CD8-positive, alpha-beta T cell (primary cell): ENCODE measurements at regions of chr15 and their contacts with region 1.

Region 1: DNA sequence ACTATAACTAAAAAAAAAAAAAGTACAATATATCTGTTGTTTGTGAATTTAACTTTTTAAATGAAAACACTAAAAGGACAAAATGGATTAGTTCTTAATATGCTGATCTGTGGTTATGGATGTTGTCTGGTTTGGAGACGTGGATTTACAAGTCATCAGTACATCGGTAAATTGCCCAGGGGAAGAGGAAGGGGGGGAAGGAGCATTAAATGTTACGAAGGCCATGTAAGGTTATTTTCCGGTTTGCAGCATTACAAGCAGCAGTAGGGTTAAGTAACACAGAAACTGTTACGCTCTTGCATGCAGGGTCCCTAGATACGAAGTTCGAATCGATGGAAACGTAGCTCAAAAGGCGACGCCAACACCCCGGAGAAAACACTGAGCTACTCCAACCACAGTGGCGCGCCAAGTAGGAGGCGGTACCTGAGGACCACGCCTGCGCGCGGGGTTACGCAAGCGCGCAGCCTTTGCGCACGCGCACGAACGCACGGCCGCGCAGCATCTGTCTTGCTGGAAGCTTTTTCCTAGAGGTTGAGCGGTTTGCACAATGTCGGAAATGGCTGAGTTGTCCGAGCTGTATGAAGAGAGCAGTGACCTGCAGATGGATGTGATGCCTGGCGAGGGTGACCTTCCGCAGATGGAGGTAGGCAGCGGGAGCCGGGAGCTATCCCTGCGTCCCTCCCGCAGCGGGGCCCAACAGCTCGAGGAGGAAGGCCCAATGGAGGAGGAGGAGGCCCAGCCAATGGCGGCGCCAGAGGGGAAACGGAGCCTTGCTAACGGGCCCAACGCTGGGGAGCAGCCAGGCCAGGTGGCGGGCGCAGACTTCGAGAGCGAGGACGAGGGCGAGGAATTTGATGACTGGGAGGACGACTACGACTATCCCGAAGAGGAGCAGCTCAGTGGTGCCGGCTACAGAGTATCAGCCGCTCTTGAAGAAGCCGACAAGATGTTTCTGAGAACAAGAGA is at the start of gene EID1:
- DNase-seq: peak; percentile 86 to 97 (median 92)
- ATAC-seq: peak; percentile 94
- H3K4me3 ChIP-seq: peak within 1 kb of the TSS; percentile 76 to 91
- H3K4me3 Mint-ChIP-seq: peak within 1 kb of the TSS; percentile 94
- H3K27ac ChIP-seq: peak within 1 kb of the TSS; percentile 74 to 84
- H3K27ac Mint-ChIP-seq: peak within 1 kb of the TSS; percentile 98
- H3K4me1 ChIP-seq: peaks cover 11% of the 10 kb centered on the region
- H3K4me1 Mint-ChIP-seq: peaks cover 23% of the 10 kb centered on the region
- H3K27me3 ChIP-seq: peaks cover 0 to 2% of the 10 kb centered on the region in 2 experiments
- H3K27me3 Mint-ChIP-seq: peaks cover 6% of the 10 kb centered on the region
- CTCF ChIP-seq: no peak
- total RNA-seq, gene EID1: 34.5 to 34.7 TPM

Region 2: GRCh38 chr15:47773163-47773562 is 1104.8 kb before region 1 on chr15:
- CTCF ChIA-PET with region 1: no interaction called
- POLR2A ChIA-PET with region 1: no interaction called
- intact Hi-C with region 1: no loop called
- DNase-seq: no peak
- ATAC-seq: no peak
- H3K4me3 ChIP-seq: no peak overlapping the region
- H3K4me3 Mint-ChIP-seq: no peak overlapping the region
- H3K27ac ChIP-seq: no peak overlapping the region
- H3K27ac Mint-ChIP-seq: no peak overlapping the region
- H3K4me1 ChIP-seq: no peaks in the 10 kb centered on the region
- H3K4me1 Mint-ChIP-seq: no peaks in the 10 kb centered on the region
- H3K27me3 ChIP-seq: no peaks in the 10 kb centered on the region
- H3K27me3 Mint-ChIP-seq: peaks cover 2% of the 10 kb centered on the region
- CTCF ChIP-seq: no peak

Region 3: DNA sequence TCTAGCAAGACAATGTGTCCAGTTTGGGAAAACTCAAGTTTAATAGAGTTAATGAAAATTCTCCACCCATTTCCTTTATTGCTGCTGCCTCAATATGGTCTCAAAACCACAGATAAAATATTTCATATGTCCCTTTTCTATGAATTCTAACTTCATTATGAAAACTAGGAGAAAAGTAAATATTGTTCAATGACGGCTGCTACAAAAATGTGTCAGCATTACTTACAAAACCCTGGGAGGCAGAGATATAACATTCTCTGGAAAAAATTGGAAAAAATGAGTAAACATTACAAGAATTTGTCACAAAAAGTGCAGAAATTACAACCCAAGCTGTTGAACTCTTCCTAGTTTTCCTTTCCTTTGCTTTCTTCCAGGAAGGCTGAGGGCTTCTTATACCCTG is 210.2 kb before region 1 on chr15:
- CTCF ChIA-PET with region 1: no interaction called
- POLR2A ChIA-PET with region 1: no interaction called
- intact Hi-C with region 1: no loop called
- DNase-seq: no peak
- ATAC-seq: no peak
- H3K4me3 ChIP-seq: no peak overlapping the region
- H3K4me3 Mint-ChIP-seq: no peak overlapping the region
- H3K27ac ChIP-seq: no peak overlapping the region
- H3K27ac Mint-ChIP-seq: no peak overlapping the region
- H3K4me1 ChIP-seq: no peaks in the 10 kb centered on the region
- H3K4me1 Mint-ChIP-seq: no peaks in the 10 kb centered on the region
- H3K27me3 ChIP-seq: no peaks in the 10 kb centered on the region
- H3K27me3 Mint-ChIP-seq: no peaks in the 10 kb centered on the region
- CTCF ChIP-seq: no peak

Region 4: DNA sequence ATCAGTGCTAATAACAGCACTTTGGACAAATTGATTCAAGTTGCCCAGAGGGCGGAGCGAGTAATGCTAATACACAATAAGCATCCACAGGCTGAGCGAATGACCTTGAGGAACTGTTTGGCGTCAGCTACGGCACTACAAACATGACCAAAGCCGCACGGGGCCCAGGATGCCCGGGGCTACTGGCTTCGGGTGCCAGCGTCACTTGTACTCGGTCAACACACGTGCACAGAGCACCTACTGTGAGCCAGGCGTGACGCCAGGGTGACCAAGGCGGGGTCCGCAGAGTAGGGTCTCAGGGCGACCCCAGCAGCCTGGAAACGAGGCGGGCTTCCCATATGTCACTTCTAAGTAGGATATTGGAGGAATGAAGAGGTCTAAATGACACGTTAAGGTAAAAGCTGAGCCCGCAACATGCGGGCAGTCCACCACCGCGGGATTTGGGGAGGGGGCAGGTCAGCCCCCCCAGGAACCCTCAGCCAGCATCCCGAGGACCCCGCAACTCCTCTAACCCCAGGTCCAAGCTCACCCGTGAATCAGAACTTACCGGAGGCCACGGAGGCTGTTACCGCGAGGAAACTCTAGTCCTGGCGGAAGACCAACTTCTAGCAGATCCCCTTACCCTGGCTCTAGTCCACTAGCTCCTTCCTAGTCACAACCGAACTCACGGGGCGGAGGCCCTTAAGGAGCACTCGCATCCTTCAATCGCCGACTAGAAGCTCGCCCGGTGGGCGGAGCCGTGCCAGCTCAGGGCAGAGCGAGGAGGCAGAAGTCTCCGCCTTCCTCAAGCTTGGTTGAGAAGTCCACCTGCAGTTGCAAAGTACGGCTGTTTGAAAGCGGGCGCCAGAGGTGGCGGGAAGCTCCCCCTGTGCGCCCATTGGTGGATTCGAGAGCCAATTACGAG is 67.2 kb before region 1 on chr15 and contains the start of gene CEP152:
- CTCF ChIA-PET with region 1: interaction called, 4 read pairs
- POLR2A ChIA-PET with region 1: interaction called, 16 read pairs
- intact Hi-C with region 1: loop called (anchors 1 to 2 kb)
- DNase-seq: peak; percentile 96 to 100 (median 98)
- ATAC-seq: peak; percentile 94
- H3K4me3 ChIP-seq: peak within 1 kb of the TSS; percentile 83 to 95
- H3K4me3 Mint-ChIP-seq: peak within 1 kb of the TSS; percentile 90
- H3K27ac ChIP-seq: peak within 1 kb of the TSS; percentile 64 to 73
- H3K27ac Mint-ChIP-seq: peak within 1 kb of the TSS; percentile 71
- H3K4me1 ChIP-seq: peaks cover 13% of the 10 kb centered on the region
- H3K4me1 Mint-ChIP-seq: peaks cover 33% of the 10 kb centered on the region
- H3K27me3 ChIP-seq: no peaks in the 10 kb centered on the region
- H3K27me3 Mint-ChIP-seq: peaks cover 6% of the 10 kb centered on the region
- CTCF ChIP-seq: no peak
- total RNA-seq, gene CEP152: 3.9 to 5.1 TPM

Region 5: DNA sequence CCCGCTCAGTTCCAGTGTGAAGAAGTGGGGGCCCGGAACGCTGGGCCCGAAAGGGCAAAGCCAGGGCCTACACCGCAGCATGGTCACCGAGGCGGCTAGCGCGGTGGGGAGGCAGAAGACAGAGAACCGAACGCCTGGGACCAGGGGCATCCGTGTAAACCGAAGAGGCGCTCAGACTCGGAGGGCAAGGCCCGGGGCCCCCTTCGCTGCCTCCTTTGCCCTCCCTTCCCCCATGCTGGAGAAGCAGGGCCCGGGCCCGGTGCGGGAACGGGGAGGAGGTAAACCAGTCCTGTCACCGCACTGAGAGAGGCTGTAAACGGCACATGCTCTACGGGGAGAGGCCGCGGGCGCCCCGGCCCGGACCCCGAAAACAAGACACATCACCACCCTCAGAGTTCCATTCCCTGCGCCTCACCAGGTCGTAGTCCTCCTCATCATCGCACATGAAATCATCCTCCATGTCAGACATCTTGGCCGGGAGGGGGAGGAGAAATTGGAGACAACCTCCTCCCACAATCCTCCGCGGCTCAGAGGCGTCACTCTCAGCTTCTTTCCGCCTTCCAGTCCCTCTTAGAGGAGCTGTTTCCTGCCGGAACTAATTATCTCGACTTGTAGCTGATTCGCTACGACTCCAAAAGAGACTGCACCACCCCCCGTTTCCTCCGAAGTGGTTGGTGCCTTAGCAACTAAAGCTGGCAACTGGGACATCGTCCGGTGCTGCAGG is 277.4 kb after region 1 on chr15 and contains the start of gene COPS2:
- CTCF ChIA-PET with region 1: no interaction called
- POLR2A ChIA-PET with region 1: interaction called, 11 read pairs
- intact Hi-C with region 1: loop called (anchors 1 to 5 kb)
- DNase-seq: peak; percentile 84 to 98 (median 93)
- ATAC-seq: peak; percentile 94
- H3K4me3 ChIP-seq: peak within 1 kb of the TSS; percentile 83 to 90
- H3K4me3 Mint-ChIP-seq: peak within 1 kb of the TSS; percentile 99
- H3K27ac ChIP-seq: peak within 1 kb of the TSS; percentile 83 to 92
- H3K27ac Mint-ChIP-seq: peak within 1 kb of the TSS; percentile 98
- H3K4me1 ChIP-seq: peaks cover 36% of the 10 kb centered on the region
- H3K4me1 Mint-ChIP-seq: peaks cover 55% of the 10 kb centered on the region
- H3K27me3 ChIP-seq: no peaks in the 10 kb centered on the region
- H3K27me3 Mint-ChIP-seq: no peaks in the 10 kb centered on the region
- CTCF ChIP-seq: no peak
- total RNA-seq, gene COPS2: 147 to 159 TPM

Region 6: DNA sequence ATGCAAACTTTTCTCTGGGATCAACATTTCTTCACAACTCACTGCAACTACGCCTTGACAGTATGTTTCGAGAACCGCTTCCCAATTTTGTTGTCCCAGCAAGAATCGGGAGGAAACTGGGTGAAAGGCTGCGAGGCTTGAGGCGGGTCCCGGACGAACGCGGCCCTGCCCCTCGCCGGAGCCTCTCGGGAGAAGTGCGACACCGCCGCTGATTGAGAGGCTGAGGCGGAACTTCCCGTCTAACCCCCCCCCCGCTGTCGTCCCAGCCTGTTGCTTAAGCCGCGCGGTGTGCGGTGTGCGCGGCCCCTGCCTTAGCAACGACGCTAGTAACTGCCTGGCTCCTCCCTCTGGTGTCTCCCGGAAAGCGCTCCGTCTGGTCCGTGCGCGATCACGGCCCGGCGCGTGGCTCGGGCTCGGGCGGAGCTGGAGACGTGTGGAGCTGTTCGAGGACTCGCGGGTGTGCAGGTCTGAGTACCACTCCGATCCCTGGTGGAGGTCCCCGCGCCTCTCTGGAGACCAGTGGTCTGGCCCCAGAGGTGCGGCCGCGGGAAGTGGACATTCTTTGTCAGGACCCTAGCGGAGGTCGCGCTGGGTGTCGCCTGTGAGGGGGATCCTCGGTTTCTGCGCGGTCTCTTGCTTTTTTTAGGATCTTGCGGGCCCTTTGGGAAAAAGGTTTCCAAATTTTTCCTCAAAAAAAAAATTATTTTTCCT is 742.9 kb after region 1 on chr15 and contains the starts of genes DTWD1 and FAM227B:
- CTCF ChIA-PET with region 1: no interaction called
- POLR2A ChIA-PET with region 1: interaction called, 3 read pairs
- intact Hi-C with region 1: loop called (anchors 1 to 5 kb)
- DNase-seq: peak; percentile 85 to 98 (median 93)
- ATAC-seq: peak; percentile 97
- H3K4me3 ChIP-seq: peak within 1 kb of the TSS; percentile 71 to 83
- H3K4me3 Mint-ChIP-seq: peak within 1 kb of the TSS; percentile 94
- H3K27ac ChIP-seq: peak within 1 kb of the TSS; percentile 86 to 89
- H3K27ac Mint-ChIP-seq: peak within 1 kb of the TSS; percentile 99
- H3K4me1 ChIP-seq: peaks cover 28% of the 10 kb centered on the region
- H3K4me1 Mint-ChIP-seq: peaks cover 54% of the 10 kb centered on the region
- H3K27me3 ChIP-seq: no peaks in the 10 kb centered on the region
- H3K27me3 Mint-ChIP-seq: no peaks in the 10 kb centered on the region
- CTCF ChIP-seq: no peak
- total RNA-seq, gene DTWD1: 8.7 to 9.7 TPM
- total RNA-seq, gene FAM227B: 3.3 to 4.3 TPM

Region 7: GRCh38 chr15:50424066-50424890 is 1546.4 kb after region 1 on chr15 and contains the start of gene USP8:
- CTCF ChIA-PET with region 1: no interaction called
- POLR2A ChIA-PET with region 1: no interaction called
- intact Hi-C with region 1: loop called in 1 of 2 experiments (anchors 5 kb)
- DNase-seq: peak; percentile 86 to 97 (median 92)
- ATAC-seq: peak; percentile 96
- H3K4me3 ChIP-seq: peak within 1 kb of the TSS; percentile 84 to 95
- H3K4me3 Mint-ChIP-seq: peak within 1 kb of the TSS; percentile 98
- H3K27ac ChIP-seq: peak within 1 kb of the TSS; percentile 91 to 96
- H3K27ac Mint-ChIP-seq: peak within 1 kb of the TSS; percentile 99
- H3K4me1 ChIP-seq: peaks cover 27% of the 10 kb centered on the region
- H3K4me1 Mint-ChIP-seq: peaks cover 42% of the 10 kb centered on the region
- H3K27me3 ChIP-seq: no peaks in the 10 kb centered on the region
- H3K27me3 Mint-ChIP-seq: no peaks in the 10 kb centered on the region
- CTCF ChIP-seq: no peak
- total RNA-seq, gene USP8: 59.5 to 61.5 TPM

Region 8: GRCh38 chr15:50798684-50799083 is 1920.8 kb after region 1 on chr15:
- CTCF ChIA-PET with region 1: no interaction called
- POLR2A ChIA-PET with region 1: no interaction called
- intact Hi-C with region 1: no loop called
- DNase-seq: no peak
- ATAC-seq: no peak
- H3K4me3 ChIP-seq: no peak overlapping the region
- H3K4me3 Mint-ChIP-seq: no peak overlapping the region
- H3K27ac ChIP-seq: no peak overlapping the region
- H3K27ac Mint-ChIP-seq: no peak overlapping the region
- H3K4me1 ChIP-seq: no peaks in the 10 kb centered on the region
- H3K4me1 Mint-ChIP-seq: no peaks in the 10 kb centered on the region
- H3K27me3 ChIP-seq: no peaks in the 10 kb centered on the region
- H3K27me3 Mint-ChIP-seq: no peaks in the 10 kb centered on the region
- CTCF ChIP-seq: no peak